Common myeloid progenitor, CD34-positive (primary cell): ENCODE measurements at regions of chr19 and their contacts with region 1.

Region 1: GRCh38 chr19:55258828-55259539 is at the start of gene PPP6R1:
- DNase-seq: peak; percentile 99 to 100 (median 100)
- H3K4me3 ChIP-seq: peak within 1 kb of the TSS; percentile 78 to 98 (median 93)
- H3K27ac ChIP-seq: peak within 1 kb of the TSS; percentile 86 to 95
- H3K4me1 ChIP-seq: peaks cover 12 to 54% (median 50%) of the 10 kb centered on the region in 4 experiments
- H3K27me3 ChIP-seq: no peaks in the 10 kb centered on the region

Region 2: GRCh38 chr19:55134732-55135131 is 124.3 kb before region 1 on chr19:
- CTCF ChIA-PET with region 1: no interaction called
- POLR2A ChIA-PET with region 1: no interaction called
- DNase-seq: no peak
- H3K4me3 ChIP-seq: no peak overlapping the region
- H3K27ac ChIP-seq: no peak overlapping the region
- H3K4me1 ChIP-seq: peaks cover 0 to 7% (median 3%) of the 10 kb centered on the region in 4 experiments
- H3K27me3 ChIP-seq: peaks cover 0 to 4% (median 0%) of the 10 kb centered on the region in 5 experiments

Region 3: DNA sequence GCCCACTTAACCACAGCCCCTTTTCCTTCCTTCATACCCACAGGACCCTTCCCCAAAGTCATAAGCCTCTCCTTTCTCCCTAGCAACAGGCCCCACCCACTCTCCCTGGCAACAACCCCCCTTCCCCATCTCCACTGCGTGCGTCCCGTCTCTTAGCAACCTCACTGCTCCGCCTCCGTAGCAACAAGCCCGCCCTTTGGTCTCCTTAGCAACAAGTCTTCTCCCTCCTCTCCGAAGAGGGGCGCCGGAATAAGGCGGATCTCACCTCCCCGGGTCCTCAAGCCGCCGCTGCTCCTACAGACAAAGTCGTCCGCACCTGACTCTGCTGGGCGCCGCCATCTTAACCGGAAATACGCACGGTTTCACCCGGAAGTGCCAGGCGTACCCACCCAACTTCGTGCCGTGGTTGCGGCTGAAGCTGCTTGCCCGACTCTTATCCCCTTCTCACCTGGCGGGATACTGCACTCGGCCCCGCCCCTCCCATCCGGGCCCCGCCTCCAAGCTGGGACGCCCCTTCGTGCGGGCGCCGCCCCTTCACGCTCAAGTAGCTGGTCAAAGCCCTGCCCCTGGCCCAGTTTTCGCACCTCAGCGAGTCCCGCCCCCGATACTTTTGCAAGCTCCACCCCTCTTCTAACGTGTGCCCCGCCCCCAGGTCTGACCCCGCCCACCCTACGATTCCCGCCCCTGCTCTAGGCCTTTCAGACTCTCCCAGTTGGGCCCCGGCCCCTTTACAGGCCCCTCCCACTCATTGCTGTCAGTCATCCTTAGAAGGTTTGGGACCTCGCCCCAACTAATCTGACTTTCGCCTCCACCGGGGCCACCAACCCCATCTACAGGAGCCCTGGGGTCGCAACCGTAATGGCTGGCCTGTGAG is 21.0 kb after region 1 on chr19 and contains the start of gene HSPBP1:
- CTCF ChIA-PET with region 1: interaction called, 24 read pairs
- POLR2A ChIA-PET with region 1: interaction called, 13 read pairs
- DNase-seq: peak; percentile 96 to 98 (median 97)
- H3K4me3 ChIP-seq: peak within 1 kb of the TSS; percentile 61 to 95 (median 88)
- H3K27ac ChIP-seq: peak within 1 kb of the TSS; percentile 75 to 93
- H3K4me1 ChIP-seq: peaks cover 0 to 25% (median 19%) of the 10 kb centered on the region in 4 experiments
- H3K27me3 ChIP-seq: peaks cover 0 to 4% (median 0%) of the 10 kb centered on the region in 5 experiments